Esophagus squamous epithelium (tissue), 5 donors: ENCODE measurements at regions of chr16 and their contacts with region 1.

Region 1: DNA sequence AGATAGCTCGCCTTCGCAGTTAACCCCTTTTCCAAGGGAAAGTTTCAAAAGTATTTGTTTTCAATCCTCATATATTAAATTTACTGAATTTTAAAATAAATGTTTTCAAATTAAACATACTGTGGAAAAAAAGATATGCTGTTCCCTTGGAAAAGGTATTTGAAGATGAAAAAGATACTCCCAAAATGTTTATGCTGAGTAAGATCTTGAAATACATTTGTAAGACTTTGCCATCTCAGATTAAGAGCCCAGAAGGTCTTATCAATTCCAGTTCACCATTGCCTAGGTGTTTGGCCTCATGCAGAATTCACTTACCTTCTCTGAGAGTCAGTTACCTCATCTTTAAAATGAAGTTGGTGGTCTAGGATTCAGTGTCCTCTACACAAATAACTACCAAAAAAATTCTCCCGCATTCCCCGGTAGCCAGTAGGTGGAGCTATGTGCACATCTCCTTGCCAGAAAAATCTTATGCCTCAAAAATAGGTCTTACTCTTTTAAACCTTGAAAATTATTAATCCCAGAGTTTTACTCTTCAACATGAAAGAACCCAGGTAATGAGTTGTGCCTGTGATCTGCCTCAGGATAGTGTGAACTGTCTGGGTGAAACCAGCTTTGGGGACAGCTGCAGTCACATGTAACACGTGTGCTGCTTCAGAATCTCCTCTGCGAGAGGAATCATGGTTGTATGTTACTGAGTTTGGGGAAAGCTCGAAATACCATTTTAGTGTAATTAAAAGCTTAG is 178.3 kb downstream of the MRTFB start:
- DNase-seq: no peak
- H3K4me3 ChIP-seq: no peak overlapping the region
- H3K27ac ChIP-seq: no peak overlapping the region
- H3K4me1 ChIP-seq: no peaks in the 10 kb centered on the region
- H3K27me3 ChIP-seq: no peaks in the 10 kb centered on the region
- CTCF ChIP-seq: peak; percentile 44 to 80 (median 72)
- POLR2A ChIP-seq: no peak

Region 2: GRCh38 chr16:14193316-14193871 is 56.1 kb before region 1 on chr16:
- intact Hi-C with region 1: loop called (anchors 10 kb)
- DNase-seq: no peak
- H3K4me3 ChIP-seq: peak overlapping the region in 2 of 4 donors; percentile 2 to 42
- H3K27ac ChIP-seq: peak overlapping the region in 2 of 4 donors; percentile 16 to 29
- H3K4me1 ChIP-seq: peaks cover 0 to 24% (median 0%) of the 10 kb centered on the region in 3 donors
- H3K27me3 ChIP-seq: no peaks in the 10 kb centered on the region
- CTCF ChIP-seq: no peak
- POLR2A ChIP-seq: no peak

Region 3: GRCh38 chr16:14534546-14534945 is 285.1 kb after region 1 on chr16:
- intact Hi-C with region 1: loop called (anchors 5 kb)
- DNase-seq: no peak
- H3K4me3 ChIP-seq: no peak overlapping the region
- H3K27ac ChIP-seq: no peak overlapping the region
- H3K4me1 ChIP-seq: peaks cover 0 to 2% (median 0%) of the 10 kb centered on the region in 3 donors
- H3K27me3 ChIP-seq: no peaks in the 10 kb centered on the region
- CTCF ChIP-seq: no peak
- POLR2A ChIP-seq: no peak